WTC11 (cell line): ENCODE measurements at regions of chr11 and their contacts with region 1.

Region 1: GRCh38 chr11:17014838-17015626 is 818 bp upstream of the PLEKHA7 start:
- DNase-seq: peak; percentile 59
- ATAC-seq: peak; percentile 58
- H3K4me3 Mint-ChIP-seq: peak overlapping the region; percentile 86
- H3K27ac Mint-ChIP-seq: peak overlapping the region; percentile 31; the same call in 1 of the 2 replicates
- H3K4me1 Mint-ChIP-seq: peaks cover 10% of the 10 kb centered on the region
- H3K27me3 Mint-ChIP-seq: peaks cover 14% of the 10 kb centered on the region; the same call in 1 of the 2 replicates
- CTCF ChIP-seq: peak; percentile 34; the same call in 1 of the 2 replicates

Region 2: DNA sequence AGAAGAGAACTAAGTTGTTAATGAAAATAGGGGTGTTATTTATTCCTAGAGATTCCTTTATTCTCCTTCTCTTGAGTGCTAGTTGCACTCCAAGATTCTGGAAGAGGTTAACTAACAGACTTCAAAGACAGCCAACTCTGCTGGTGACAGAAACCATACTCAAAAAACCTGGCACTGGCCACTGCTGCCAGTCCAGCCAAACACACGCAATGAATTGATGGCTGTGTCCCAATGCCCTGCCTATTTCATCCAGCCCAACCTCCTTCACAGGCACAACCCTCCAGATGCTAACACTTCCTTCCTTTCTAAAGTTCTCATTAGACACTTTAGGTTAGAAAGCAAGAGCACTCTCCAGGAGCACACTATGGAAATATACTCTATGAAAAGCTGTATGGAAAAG is 427.4 kb before region 1 on chr11:
- CTCF ChIA-PET with region 1: no interaction called
- POLR2A ChIA-PET with region 1: no interaction called
- DNase-seq: no peak
- ATAC-seq: no peak
- H3K4me3 Mint-ChIP-seq: no peak overlapping the region
- H3K27ac Mint-ChIP-seq: no peak overlapping the region
- H3K4me1 Mint-ChIP-seq: no peaks in the 10 kb centered on the region
- H3K27me3 Mint-ChIP-seq: peaks cover 4% of the 10 kb centered on the region
- CTCF ChIP-seq: no peak

Region 3: GRCh38 chr11:16945671-16946469 is 69.2 kb before region 1 on chr11:
- CTCF ChIA-PET with region 1: interaction called, 12 read pairs
- POLR2A ChIA-PET with region 1: interaction called, 5 read pairs
- DNase-seq: peak; percentile 45
- ATAC-seq: peak; percentile 76
- H3K4me3 Mint-ChIP-seq: no peak overlapping the region
- H3K27ac Mint-ChIP-seq: 0 out of 2 replicates have a peak overlapping the region, but pooled peaks have one; percentile 24
- H3K4me1 Mint-ChIP-seq: peaks cover 22% of the 10 kb centered on the region
- H3K27me3 Mint-ChIP-seq: no peaks in the 10 kb centered on the region
- CTCF ChIP-seq: no peak

Region 4: GRCh38 chr11:16966930-16967671 is 47.9 kb before region 1 on chr11:
- CTCF ChIA-PET with region 1: no interaction called
- POLR2A ChIA-PET with region 1: no interaction called
- DNase-seq: no peak
- ATAC-seq: no peak
- H3K4me3 Mint-ChIP-seq: no peak overlapping the region
- H3K27ac Mint-ChIP-seq: no peak overlapping the region
- H3K4me1 Mint-ChIP-seq: no peaks in the 10 kb centered on the region
- H3K27me3 Mint-ChIP-seq: no peaks in the 10 kb centered on the region
- CTCF ChIP-seq: no peak

Region 5: GRCh38 chr11:16981651-16982194 is 33.3 kb before region 1 on chr11:
- CTCF ChIA-PET with region 1: interaction called, 14 read pairs
- POLR2A ChIA-PET with region 1: no interaction called
- DNase-seq: peak; percentile 26
- ATAC-seq: peak; percentile 79
- H3K4me3 Mint-ChIP-seq: no peak overlapping the region
- H3K27ac Mint-ChIP-seq: no peak overlapping the region
- H3K4me1 Mint-ChIP-seq: peaks cover 62% of the 10 kb centered on the region
- H3K27me3 Mint-ChIP-seq: no peaks in the 10 kb centered on the region
- CTCF ChIP-seq: no peak

Region 6: DNA sequence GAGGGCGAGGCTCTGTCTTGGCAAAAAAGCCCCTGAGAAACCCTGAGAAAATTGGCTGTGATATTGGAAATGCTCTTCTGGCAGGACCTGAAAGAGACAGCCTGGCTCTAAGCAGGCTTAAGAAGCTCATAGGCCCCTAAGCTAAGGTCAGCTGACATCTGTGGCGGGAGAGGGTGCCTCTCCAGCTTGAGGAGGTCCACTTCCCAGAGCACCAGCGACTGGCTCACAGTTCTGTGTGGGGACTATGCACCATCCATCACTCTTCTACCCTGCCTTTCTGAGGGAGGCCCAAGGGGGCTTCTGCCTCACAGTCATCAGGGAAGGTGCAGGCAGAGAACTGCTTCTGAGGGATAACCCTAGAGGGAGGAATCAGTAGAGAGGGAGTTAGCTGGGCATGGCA is 13.2 kb before region 1 on chr11:
- CTCF ChIA-PET with region 1: interaction called, 10 read pairs
- POLR2A ChIA-PET with region 1: no interaction called
- DNase-seq: no peak
- ATAC-seq: no peak
- H3K4me3 Mint-ChIP-seq: no peak overlapping the region
- H3K27ac Mint-ChIP-seq: no peak overlapping the region
- H3K4me1 Mint-ChIP-seq: peaks cover 6% of the 10 kb centered on the region; the same call in 1 of the 2 replicates
- H3K27me3 Mint-ChIP-seq: no peaks in the 10 kb centered on the region
- CTCF ChIP-seq: no peak

Region 7: GRCh38 chr11:17026487-17027082 is 11.6 kb after region 1 on chr11:
- CTCF ChIA-PET with region 1: interaction called, 15 read pairs
- POLR2A ChIA-PET with region 1: no interaction called
- DNase-seq: no peak
- ATAC-seq: no peak
- H3K4me3 Mint-ChIP-seq: no peak overlapping the region
- H3K27ac Mint-ChIP-seq: no peak overlapping the region; the same call in 1 of the 2 replicates
- H3K4me1 Mint-ChIP-seq: peaks cover 3% of the 10 kb centered on the region; the same call in 1 of the 2 replicates
- H3K27me3 Mint-ChIP-seq: peaks cover 4% of the 10 kb centered on the region; the same call in 1 of the 2 replicates
- CTCF ChIP-seq: no peak

Region 8: GRCh38 chr11:17046690-17047089 is 31.7 kb after region 1 on chr11:
- CTCF ChIA-PET with region 1: no interaction called
- POLR2A ChIA-PET with region 1: no interaction called
- DNase-seq: no peak
- ATAC-seq: no peak
- H3K4me3 Mint-ChIP-seq: no peak overlapping the region
- H3K27ac Mint-ChIP-seq: no peak overlapping the region
- H3K4me1 Mint-ChIP-seq: no peaks in the 10 kb centered on the region
- H3K27me3 Mint-ChIP-seq: no peaks in the 10 kb centered on the region; the same call in 1 of the 2 replicates
- CTCF ChIP-seq: no peak

Region 9: DNA sequence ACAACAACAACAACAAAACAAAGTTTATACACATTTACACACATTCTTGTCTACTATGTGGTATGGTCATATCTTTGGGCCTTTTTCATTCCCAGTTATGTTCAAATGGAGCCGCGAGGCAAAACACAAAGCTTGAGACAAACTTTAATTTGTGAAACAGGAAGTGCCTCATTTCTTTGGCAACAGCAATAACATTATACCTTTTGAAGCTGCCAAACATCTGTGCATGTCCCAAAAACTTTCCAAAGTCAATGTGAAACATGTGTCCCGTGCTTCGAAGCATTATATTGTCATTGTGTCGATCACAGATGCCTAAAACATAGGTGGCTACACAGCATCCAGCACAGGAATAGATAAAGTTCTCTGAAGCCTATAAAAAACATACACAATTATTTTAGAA is 87.4 kb after region 1 on chr11:
- CTCF ChIA-PET with region 1: no interaction called
- POLR2A ChIA-PET with region 1: no interaction called
- DNase-seq: no peak
- ATAC-seq: no peak
- H3K4me3 Mint-ChIP-seq: no peak overlapping the region
- H3K27ac Mint-ChIP-seq: no peak overlapping the region
- H3K4me1 Mint-ChIP-seq: no peaks in the 10 kb centered on the region
- H3K27me3 Mint-ChIP-seq: no peaks in the 10 kb centered on the region
- CTCF ChIP-seq: no peak